ENCODE measurements at regions of chr19 and their contacts with region 1.

Region 1: DNA sequence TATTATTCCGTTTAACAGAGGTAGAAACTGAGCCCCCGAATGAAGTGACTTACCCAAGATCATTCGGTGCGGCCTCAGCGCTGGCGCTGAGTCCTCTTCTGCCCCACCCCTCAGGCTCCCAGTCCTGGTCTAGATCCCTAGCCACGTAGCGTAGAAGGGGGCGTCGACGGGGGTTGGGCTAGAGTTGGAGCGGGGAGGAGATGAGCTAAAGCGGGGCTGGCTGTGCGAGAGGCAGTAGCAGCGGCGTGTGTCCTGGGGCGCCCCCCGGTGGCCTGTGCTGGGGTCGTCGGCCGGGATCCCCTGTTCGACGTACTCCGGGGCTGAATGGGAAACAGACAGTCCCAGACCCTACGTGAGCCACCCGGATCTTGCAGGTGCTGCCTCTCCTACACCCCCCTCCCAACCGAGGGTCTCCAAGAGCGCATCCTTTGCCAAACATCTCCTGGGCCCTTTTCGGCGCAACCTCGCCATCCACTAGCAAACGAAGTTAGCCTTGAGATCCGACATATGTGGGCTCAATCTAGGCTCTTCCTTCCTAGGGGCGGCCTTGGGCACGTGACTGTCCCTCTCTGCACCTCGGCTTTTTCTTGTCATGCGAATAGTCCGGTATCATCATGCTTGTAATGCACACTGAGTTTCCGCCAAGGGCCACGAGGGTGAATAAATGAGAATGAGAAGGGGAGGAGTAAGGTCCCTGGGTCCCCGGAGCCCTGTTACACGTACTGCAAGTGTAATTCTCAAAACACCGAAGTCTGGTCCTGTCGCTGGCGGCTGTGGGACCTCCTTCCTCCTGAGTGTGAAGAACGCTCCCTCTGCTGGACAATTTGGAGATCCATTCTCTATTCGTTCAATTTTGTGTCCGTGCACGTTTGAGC is 47.7 kb downstream of the CYP4F22 start:
- DNase-seq: peak; percentile 86 to 94 (median 93)
- H3K4me3 ChIP-seq: peak overlapping the region in 1 of 4 donors; percentile 14
- H3K27ac ChIP-seq: peak overlapping the region in 2 of 5 donors; percentile 43 to 47
- H3K4me1 ChIP-seq: peaks cover 9 to 16% of the 10 kb centered on the region in 2 donors
- H3K27me3 ChIP-seq: peaks cover 5% of the 10 kb centered on the region
- CTCF ChIP-seq: peak; percentile 60 to 88 (median 84)
- POLR2A ChIP-seq: no peak

Region 2: DNA sequence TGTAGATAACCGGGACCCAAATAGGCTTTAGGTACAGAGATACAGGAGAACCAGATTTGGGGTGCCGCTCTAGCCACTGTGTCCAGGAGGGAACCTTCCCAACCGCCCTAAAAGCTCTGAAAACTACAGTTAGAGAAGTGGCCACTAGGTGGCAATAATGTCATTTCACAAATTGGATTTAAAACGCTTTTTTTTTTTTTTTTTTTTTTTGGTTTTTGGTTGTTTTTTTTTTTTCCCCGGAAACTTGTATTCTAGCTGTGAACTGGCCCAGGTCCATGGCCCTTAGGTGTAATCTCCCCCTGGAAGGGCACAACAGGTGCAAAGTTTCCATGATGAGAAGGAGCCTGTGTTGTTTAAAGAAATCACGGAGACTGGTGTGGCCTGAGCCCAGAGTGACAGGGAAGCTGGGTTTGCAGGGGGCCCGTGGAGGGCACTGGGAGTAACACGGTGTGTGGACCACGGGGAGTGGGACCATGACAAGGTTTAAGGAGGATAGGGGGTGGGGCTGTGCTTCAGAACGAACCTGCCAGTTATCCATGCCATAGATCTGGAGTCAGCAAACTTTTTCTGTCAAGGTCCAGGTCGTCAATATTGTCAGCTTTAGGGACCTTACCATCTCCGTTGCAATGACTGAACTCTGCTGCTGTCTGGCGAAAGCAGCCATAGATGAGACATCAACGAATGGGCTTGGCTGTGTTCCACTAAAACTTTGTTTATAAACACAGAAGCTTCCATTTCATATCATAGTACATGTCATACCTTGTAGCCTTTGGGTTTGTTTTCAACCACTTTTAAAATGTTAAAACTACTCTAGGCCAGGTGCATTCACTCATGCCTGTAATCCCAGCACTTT is 463.9 kb before region 1 on chr19:
- intact Hi-C with region 1: loop called in 1 of 2 experiments (anchors 5 kb)
- DNase-seq: peak in 6 of 7 donors; percentile 26 to 66 (median 54)
- H3K4me3 ChIP-seq: no peak overlapping the region
- H3K27ac ChIP-seq: no peak overlapping the region
- H3K4me1 ChIP-seq: peaks cover 5 to 7% of the 10 kb centered on the region in 2 donors
- H3K27me3 ChIP-seq: no peaks in the 10 kb centered on the region
- CTCF ChIP-seq: peak; percentile 55 to 77 (median 66)
- POLR2A ChIP-seq: no peak

Region 3: DNA sequence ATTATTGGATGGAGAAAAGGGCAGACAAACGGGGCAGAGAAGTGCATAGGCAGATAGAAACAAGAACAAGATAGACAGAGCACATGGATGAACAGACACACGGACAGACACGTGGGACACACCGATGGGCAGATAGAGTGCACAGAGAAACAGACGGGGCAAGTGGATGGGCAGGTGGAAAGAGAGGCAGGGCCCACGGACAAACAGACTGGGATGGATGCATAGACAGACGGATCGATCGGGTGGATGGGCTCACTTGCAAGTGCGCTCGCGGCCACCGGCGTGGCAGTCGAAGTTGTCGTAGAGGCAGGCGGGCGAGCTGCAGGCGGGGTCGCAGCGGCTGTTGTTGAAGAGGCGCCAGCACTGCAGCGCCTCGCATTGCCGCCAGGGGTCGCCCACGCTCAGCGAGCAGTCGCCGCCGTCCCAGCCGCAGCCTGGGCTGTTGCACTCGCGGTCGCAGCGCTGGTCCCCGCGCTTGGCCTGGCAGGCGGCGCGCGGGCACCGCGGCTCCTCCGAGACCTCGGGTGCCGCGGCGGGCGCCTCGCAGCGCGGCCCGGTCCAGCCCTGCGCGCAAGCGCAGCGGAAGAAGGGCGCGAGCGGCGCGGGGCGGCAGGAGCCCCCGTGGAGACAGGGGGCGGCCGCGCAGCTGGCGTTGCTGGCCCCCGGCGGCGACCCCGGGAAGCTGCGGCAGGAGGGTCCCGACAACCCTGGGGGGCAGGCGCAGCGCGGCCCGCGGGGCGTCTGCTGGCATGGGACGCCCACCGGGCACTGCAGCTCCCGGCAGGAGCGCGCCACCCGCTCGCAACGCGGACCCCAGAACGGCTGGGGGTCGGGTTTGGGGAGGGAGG is 378.5 kb before region 1 on chr19:
- intact Hi-C with region 1: loop called (anchors 2 to 5 kb)
- DNase-seq: peak; percentile 65 to 87 (median 81)
- H3K4me3 ChIP-seq: peak overlapping the region in 1 of 4 donors; percentile 47
- H3K27ac ChIP-seq: no peak overlapping the region
- H3K4me1 ChIP-seq: no peaks in the 10 kb centered on the region
- H3K27me3 ChIP-seq: no peaks in the 10 kb centered on the region
- CTCF ChIP-seq: peak; percentile 78 to 100 (median 92)
- POLR2A ChIP-seq: no peak

Region 4: DNA sequence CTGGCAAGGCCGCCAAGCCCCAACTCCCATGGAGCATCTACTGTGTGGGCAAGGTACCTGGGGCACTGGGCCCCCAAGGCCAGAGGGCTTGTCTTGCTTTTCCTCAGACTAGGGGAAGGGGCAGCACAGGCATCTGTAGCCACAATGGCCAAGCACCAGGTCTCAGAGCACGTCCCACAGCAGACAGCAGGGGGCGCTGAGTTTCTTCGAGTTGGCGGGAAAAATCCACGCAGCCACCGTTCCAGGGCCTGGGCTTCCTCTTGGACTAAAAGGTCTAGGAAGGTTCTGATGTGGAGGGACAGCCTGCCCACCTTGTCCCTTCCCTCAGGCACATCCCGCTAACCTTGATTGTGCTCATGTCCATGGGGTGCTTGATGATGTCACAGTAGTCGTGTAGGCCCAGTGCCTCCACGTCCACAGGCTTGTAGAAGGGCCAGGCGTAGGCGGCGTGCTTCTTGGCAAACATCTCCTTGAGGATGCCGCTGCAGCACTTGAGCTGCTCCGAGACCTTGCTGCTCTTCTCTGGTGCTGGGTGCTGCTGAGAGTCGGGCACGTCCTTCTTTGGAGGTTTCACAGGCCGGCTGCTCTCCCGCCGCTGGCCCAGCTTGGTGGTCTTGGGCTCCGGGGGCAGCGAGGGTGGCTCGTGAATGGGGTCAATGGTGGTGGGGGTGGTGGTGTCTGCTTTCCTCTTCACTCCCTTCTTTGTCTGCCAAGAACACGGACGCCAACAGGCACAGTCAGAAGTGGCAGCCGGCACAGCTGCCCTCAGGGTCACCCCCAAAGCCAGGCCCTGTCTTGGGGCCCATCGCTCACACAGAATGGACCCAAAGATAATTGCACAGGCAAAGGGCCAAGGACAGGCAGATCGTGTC is 291.7 kb before region 1 on chr19:
- intact Hi-C with region 1: loop called (anchors 10 kb)
- DNase-seq: peak; percentile 71 to 90 (median 81)
- H3K4me3 ChIP-seq: no peak overlapping the region
- H3K27ac ChIP-seq: peak overlapping the region in 4 of 5 donors; percentile 50 to 91 (median 75)
- H3K4me1 ChIP-seq: peaks cover 26 to 46% of the 10 kb centered on the region in 2 donors
- H3K27me3 ChIP-seq: no peaks in the 10 kb centered on the region
- CTCF ChIP-seq: peak; percentile 70 to 88 (median 78)
- POLR2A ChIP-seq: no peak

Region 5: DNA sequence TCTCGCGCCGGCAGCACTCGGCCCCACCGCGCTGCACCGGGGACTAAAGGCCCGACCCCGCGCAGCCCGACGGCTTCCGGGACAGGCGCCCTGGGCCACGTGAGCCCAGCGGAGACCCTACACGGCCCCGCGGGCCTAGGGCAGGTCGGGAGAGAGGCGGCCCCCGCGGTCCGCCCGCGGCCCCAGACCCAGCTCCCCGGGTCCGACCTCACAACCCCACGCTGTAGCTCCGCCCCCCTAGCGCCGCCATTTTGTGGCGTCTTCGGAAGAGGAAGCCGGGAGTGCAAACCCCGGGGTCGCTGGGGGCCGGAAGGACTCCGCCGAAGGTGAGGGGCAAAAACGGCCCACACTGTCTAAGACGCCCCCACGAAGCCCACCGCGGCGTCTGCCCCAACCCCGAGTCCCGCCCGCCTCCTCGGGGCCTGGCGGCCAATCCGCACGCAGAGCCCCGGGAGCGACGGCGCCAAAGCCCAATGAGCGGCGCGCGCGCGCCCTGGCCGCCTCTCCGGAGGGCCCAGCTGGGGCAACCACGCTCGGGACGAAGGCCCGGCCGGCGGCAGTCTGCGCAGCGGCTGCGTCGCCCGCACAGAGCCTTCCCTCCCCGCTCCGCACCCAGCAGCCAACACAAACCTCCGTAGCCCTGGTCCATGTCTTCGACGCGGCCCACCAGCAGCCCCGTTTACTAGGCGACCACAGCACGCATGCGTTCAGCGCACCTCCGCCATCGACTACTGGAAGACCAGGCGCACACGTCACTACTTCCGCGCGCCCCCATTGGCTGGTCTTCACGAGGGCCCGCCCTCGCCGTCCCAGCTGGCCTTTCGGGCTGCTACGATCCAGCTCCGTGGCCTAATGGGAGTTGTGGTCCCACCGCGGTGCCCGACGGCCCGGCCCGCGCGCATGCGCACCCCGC is 176.7 kb before region 1 on chr19 and contains the start of gene AKAP8:
- intact Hi-C with region 1: loop called in 1 of 2 experiments (anchors 10 kb)
- DNase-seq: peak; percentile 98 to 99 (median 99)
- H3K4me3 ChIP-seq: peak within 1 kb of the TSS; percentile 61 to 98 (median 86)
- H3K27ac ChIP-seq: peak within 1 kb of the TSS; percentile 86 to 98 (median 95)
- H3K4me1 ChIP-seq: peaks cover 19 to 47% of the 10 kb centered on the region in 2 donors
- H3K27me3 ChIP-seq: no peaks in the 10 kb centered on the region
- CTCF ChIP-seq: peak in 1 of 6 experiments; percentile 1
- POLR2A ChIP-seq: peak; percentile 79 to 91
- total RNA-seq, gene AKAP8: 13.0 to 45.8 (median 31.6) TPM

Region 6: GRCh38 chr19:15449620-15450527 is 106.1 kb before region 1 on chr19 and contains the start of gene WIZ:
- intact Hi-C with region 1: loop called (anchors 5 to 10 kb)
- DNase-seq: peak; percentile 87 to 93 (median 91)
- H3K4me3 ChIP-seq: peak within 1 kb of the TSS in 3 of 4 donors; percentile 10 to 93 (median 62)
- H3K27ac ChIP-seq: peak within 1 kb of the TSS in 4 of 5 donors; percentile 64 to 96 (median 68)
- H3K4me1 ChIP-seq: peaks cover 7 to 10% of the 10 kb centered on the region in 2 donors
- H3K27me3 ChIP-seq: no peaks in the 10 kb centered on the region
- CTCF ChIP-seq: no peak
- POLR2A ChIP-seq: no peak
- total RNA-seq, gene WIZ: 5.7 to 49.2 (median 32.8) TPM

Measured in adrenal gland (tissue), 19 donors.